Naive thymus-derived CD4-positive, alpha-beta T cell (primary cell): ENCODE measurements at regions of chr2 and their contacts with region 1.

Region 1: DNA sequence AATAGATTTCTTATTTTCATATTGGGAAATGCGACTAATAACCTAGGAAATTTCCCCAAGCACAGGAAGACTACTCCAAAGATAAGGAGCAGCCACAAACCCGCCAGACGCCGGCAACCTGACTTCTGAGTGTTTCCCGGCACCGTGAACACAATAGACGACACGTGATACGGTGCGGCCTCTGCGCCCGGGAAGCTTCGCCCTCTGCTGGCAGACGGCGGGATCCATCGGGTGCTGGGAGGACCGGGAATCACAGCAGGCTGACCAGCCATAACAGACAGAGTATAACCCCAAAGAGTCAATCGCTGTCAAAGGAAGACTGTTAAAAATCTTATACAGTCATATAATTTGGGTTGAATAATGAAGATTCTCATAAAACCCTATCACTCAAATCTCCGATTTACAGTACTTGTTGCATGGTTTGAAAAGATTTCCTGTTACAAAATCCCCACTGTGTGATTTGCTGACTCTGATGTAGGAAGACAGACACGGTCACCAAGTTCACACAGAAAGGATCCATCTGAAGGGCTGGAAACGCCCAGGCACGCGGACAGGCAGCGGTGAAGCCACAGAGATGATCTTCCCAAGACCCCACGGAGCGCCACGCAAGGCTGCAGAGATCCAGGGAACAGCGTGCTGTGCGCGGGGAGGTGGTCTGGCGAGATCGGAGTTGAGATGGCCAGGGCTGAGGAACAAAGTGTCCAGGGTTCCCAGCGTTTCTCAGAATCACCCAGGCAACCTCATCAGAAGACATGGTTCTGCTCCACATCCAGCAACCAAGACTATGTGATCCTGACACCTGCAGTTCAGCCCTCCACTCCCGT is 73.8 kb downstream of the EIPR1 start:
- DNase-seq: peak; percentile 40 to 83 (median 70)
- ATAC-seq: peak; percentile 94
- H3K4me3 ChIP-seq: no peak overlapping the region
- H3K4me3 Mint-ChIP-seq: peak overlapping the region in 6 of 10 donors; percentile 18 to 65 (median 34)
- H3K27ac ChIP-seq: no peak overlapping the region
- H3K27ac Mint-ChIP-seq: peak overlapping the region in 6 of 9 donors; percentile 34 to 71 (median 68)
- H3K4me1 ChIP-seq: peaks cover 3 to 4% of the 10 kb centered on the region in 2 donors
- H3K4me1 Mint-ChIP-seq: peaks cover 9 to 31% (median 26%) of the 10 kb centered on the region in 7 donors
- H3K27me3 ChIP-seq: no peaks in the 10 kb centered on the region
- H3K27me3 Mint-ChIP-seq: no peaks in the 10 kb centered on the region

Region 2: DNA sequence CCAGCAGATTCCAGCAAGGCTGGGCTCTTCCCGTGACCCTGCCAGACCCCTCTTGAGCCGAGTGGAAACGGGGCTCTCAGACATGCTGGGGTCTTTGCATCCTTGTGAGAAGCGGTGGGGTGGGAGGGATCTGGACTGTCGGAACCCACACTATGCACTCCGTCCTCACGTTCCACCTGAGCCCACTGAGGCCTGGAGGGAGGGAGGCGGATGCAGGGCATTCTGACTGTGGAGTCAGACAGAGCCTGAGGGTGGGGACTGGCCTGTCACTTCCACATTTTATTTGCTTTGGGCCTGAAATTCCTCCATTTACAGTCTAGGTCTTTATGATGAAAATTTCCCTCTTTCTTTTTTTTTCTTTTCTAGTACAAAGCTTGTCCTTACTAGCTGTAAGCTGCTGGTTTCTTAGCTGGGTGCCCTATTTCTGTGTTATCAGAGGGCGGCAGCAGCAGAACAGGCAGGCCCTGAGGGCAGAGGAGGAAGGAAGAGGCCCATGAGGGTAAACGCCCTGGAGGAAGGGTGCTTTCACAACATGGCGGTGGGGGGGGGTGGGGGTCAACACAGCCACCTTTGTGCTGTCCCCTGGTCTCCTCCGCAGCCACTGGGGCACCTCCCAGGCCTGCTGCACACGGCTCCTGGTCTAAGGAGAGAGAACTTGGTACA is 599.2 kb before region 1 on chr2:
- CTCF ChIA-PET with region 1: no interaction called
- POLR2A ChIA-PET with region 1: no interaction called
- intact Hi-C with region 1: loop called in 1 of 2 experiments (anchors 2 kb)
- DNase-seq: peak in 1 of 9 donors; percentile 18
- ATAC-seq: no peak
- H3K4me3 ChIP-seq: no peak overlapping the region
- H3K4me3 Mint-ChIP-seq: peak overlapping the region in 6 of 10 donors; percentile 3 to 64 (median 53)
- H3K27ac ChIP-seq: no peak overlapping the region
- H3K27ac Mint-ChIP-seq: peak overlapping the region in 5 of 9 donors; percentile 33 to 89 (median 77)
- H3K4me1 ChIP-seq: peaks cover 0 to 13% of the 10 kb centered on the region in 2 donors
- H3K4me1 Mint-ChIP-seq: peaks cover 0 to 34% (median 20%) of the 10 kb centered on the region in 7 donors
- H3K27me3 ChIP-seq: no peaks in the 10 kb centered on the region
- H3K27me3 Mint-ChIP-seq: no peaks in the 10 kb centered on the region

Region 3: DNA sequence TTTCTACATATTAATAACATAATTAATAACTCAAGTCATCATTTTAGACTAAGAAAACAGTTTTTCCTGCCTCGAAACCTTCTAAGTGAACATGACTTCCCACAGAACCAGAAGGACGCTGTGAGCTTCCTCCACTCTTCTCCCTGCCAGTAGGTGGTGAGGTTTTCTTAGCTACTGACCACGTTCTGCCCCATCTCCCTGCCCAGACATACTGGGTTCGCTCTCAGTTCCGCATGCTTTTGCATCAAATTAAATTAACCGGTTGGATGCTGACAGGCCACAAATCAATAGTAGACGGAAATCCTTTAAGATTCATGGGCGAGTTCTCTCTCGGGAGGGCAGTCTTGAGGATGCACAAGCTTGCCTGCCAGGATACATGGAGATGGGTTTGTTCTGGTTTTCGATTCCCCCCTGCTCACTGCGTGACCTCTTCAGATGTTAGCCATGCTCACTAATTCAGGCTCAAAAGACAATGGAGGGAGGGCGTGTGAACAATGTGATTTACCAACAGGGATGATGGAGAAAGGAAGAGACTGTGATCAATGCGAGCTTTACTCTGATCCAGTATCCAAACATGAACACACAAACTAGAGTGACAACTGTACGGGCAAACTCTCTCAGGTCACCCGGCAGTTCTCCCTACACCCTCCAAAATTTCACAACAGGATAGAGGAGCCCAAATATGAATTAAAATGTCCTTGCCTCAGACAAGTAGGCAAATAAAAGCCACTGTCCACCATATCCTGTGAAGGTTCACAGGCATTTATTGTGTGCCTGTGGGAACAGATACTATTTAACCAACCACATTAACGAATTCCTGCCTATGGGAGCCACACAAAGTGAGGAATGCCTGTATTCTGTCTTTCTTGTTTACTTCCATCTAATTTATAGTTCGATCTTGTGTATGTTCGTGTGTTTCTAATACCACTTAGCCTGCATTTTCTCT is 301.9 kb before region 1 on chr2:
- CTCF ChIA-PET with region 1: interaction called, 3 read pairs
- POLR2A ChIA-PET with region 1: no interaction called
- intact Hi-C with region 1: loop called (anchors 1 kb)
- DNase-seq: peak in 2 of 9 donors; percentile 2 to 4
- ATAC-seq: no peak
- H3K4me3 ChIP-seq: no peak overlapping the region
- H3K4me3 Mint-ChIP-seq: no peak overlapping the region
- H3K27ac ChIP-seq: no peak overlapping the region
- H3K27ac Mint-ChIP-seq: no peak overlapping the region
- H3K4me1 ChIP-seq: no peaks in the 10 kb centered on the region
- H3K4me1 Mint-ChIP-seq: peaks cover 0 to 1% (median 0%) of the 10 kb centered on the region in 7 donors
- H3K27me3 ChIP-seq: no peaks in the 10 kb centered on the region
- H3K27me3 Mint-ChIP-seq: peaks cover 11 to 29% (median 28%) of the 10 kb centered on the region in 5 donors

Region 4: GRCh38 chr2:3198119-3198518 is 105.7 kb before region 1 on chr2:
- CTCF ChIA-PET with region 1: interaction called, 4 read pairs
- POLR2A ChIA-PET with region 1: interaction called, 3 read pairs
- intact Hi-C with region 1: loop called (anchors 1 kb)
- DNase-seq: peak in 1 of 9 donors; percentile 9
- ATAC-seq: no peak
- H3K4me3 ChIP-seq: no peak overlapping the region
- H3K4me3 Mint-ChIP-seq: no peak overlapping the region
- H3K27ac ChIP-seq: no peak overlapping the region
- H3K27ac Mint-ChIP-seq: peak overlapping the region in 1 of 9 donors; percentile 29
- H3K4me1 ChIP-seq: no peaks in the 10 kb centered on the region
- H3K4me1 Mint-ChIP-seq: peaks cover 0 to 5% (median 2%) of the 10 kb centered on the region in 7 donors
- H3K27me3 ChIP-seq: no peaks in the 10 kb centered on the region
- H3K27me3 Mint-ChIP-seq: no peaks in the 10 kb centered on the region

Region 5: DNA sequence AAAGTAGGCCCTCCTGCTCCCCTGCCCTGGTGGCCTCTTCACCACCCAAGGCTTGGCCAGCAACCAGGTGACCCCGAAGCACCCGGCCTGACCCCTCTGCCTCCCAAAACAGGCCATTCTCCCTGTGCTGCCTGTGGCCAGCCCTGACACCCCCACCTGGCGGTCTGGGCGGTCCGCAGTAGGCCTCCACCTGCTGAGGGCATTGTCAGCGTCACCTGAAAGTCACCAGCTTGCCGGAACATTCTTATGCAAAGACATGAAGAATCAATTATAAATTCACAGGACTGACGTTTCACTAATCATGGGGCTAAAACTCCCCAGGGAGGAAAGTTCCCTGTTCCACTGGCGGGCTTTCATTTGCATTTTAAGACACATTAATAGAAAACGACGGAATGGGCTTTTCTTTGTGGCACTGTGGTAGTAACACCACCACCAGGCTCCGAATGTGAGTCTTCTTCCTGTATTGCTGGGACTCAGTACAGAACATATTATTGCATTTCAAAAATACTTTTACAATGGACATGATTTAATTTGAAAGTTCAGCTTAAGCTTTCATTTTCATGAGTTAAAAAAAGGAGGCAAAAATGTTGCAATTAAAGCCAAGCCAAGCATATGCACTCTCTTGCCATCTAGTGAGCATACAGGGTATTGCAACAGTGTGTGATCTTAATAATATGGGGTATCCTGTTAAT is 158.2 kb after region 1 on chr2:
- CTCF ChIA-PET with region 1: no interaction called
- POLR2A ChIA-PET with region 1: no interaction called
- intact Hi-C with region 1: loop called in 1 of 2 experiments (anchors 1 kb)
- DNase-seq: peak in 6 of 9 donors; percentile 27 to 64 (median 52)
- ATAC-seq: peak; percentile 80
- H3K4me3 ChIP-seq: no peak overlapping the region
- H3K4me3 Mint-ChIP-seq: peak overlapping the region in 7 of 10 donors; percentile 39 to 75 (median 51)
- H3K27ac ChIP-seq: peak overlapping the region; percentile 49
- H3K27ac Mint-ChIP-seq: peak overlapping the region in 8 of 9 donors; percentile 38 to 89 (median 77)
- H3K4me1 ChIP-seq: peaks cover 0 to 5% of the 10 kb centered on the region in 2 donors
- H3K4me1 Mint-ChIP-seq: peaks cover 4 to 25% (median 14%) of the 10 kb centered on the region in 7 donors
- H3K27me3 ChIP-seq: no peaks in the 10 kb centered on the region
- H3K27me3 Mint-ChIP-seq: no peaks in the 10 kb centered on the region